ENCODE measurements at regions of chr10 and their contacts with region 1.

Region 1: DNA sequence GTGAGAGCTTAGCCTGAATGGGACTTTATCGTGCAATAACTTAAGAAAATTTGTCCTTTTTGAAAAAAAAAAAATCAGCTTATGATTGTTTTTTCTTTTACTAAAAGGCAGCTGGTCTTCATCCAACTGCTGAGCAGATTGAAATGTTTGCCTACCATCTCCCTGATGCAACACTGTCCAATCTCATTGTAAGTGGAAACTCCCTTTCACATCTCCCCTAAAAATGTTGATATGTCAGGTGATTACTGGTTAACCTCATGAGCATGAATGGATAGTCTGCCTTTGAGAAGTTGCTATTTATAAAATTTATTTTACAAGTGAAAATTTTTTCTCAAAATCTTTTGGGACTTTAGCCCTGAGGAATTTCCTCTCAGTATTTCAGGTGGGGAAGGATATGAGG is 17.8 kb upstream of the HKDC1 start:
- DNase-seq: peak in 1 of 2 donors; percentile 68
- ATAC-seq: peak; percentile 47 to 75 (median 55)
- H3K4me3 ChIP-seq: no peak overlapping the region
- H3K4me3 Mint-ChIP-seq: peak overlapping the region; percentile 40
- H3K27ac ChIP-seq: peak overlapping the region; percentile 57
- H3K27ac Mint-ChIP-seq: peak overlapping the region; percentile 61 to 82
- H3K4me1 ChIP-seq: peaks cover 42% of the 10 kb centered on the region
- H3K4me1 Mint-ChIP-seq: peaks cover 34 to 49% of the 10 kb centered on the region in 2 donors
- H3K27me3 ChIP-seq: no peaks in the 10 kb centered on the region
- H3K27me3 Mint-ChIP-seq: no peaks in the 10 kb centered on the region
- CTCF ChIP-seq: no peak

Region 2: GRCh38 chr10:69179743-69180524 is 22.4 kb before region 1 on chr10 and contains the start of gene SUPV3L1:
- intact Hi-C with region 1: loop called (anchors 2 kb)
- DNase-seq: peak; percentile 90 to 95
- ATAC-seq: peak; percentile 75 to 89 (median 81)
- H3K4me3 ChIP-seq: peak within 1 kb of the TSS; percentile 86
- H3K4me3 Mint-ChIP-seq: peak within 1 kb of the TSS; percentile 95
- H3K27ac ChIP-seq: peak within 1 kb of the TSS; percentile 92
- H3K27ac Mint-ChIP-seq: peak within 1 kb of the TSS; percentile 98 to 99
- H3K4me1 ChIP-seq: peaks cover 19% of the 10 kb centered on the region
- H3K4me1 Mint-ChIP-seq: peaks cover 44 to 58% of the 10 kb centered on the region in 2 donors
- H3K27me3 ChIP-seq: no peaks in the 10 kb centered on the region
- H3K27me3 Mint-ChIP-seq: no peaks in the 10 kb centered on the region
- CTCF ChIP-seq: no peak
- total RNA-seq, gene SUPV3L1: 56.6 to 104 (median 67.1) TPM

Measured in natural killer cell (primary cell).